ENCODE measurements at regions of chr13 and their contacts with region 1.

Region 1: DNA sequence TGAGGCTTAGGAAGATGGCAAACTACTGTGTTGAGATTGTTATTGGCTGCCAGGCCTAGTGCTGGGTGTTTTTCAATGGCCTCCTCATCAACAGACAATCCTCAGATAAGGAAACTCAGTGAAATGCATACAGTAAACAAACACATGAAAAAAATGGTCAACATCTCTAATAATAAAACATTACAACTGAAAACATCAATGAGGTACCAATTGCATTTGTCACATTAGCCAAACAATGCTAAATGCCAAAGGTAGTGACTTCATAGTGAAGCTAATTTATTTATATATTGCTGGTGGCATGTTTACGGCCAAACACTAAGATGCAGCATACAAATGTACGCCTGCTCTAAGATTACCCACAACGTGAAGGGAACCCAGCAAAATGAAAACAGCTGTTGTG is 224.0 kb upstream of the UBL3 start:
- DNase-seq: no peak
- H3K4me3 ChIP-seq: no peak overlapping the region
- H3K27ac ChIP-seq: no peak overlapping the region
- H3K4me1 ChIP-seq: no peaks in the 10 kb centered on the region
- H3K27me3 ChIP-seq: no peaks in the 10 kb centered on the region
- CTCF ChIP-seq: no peak
- POLR2A ChIP-seq: no peak

Region 2: DNA sequence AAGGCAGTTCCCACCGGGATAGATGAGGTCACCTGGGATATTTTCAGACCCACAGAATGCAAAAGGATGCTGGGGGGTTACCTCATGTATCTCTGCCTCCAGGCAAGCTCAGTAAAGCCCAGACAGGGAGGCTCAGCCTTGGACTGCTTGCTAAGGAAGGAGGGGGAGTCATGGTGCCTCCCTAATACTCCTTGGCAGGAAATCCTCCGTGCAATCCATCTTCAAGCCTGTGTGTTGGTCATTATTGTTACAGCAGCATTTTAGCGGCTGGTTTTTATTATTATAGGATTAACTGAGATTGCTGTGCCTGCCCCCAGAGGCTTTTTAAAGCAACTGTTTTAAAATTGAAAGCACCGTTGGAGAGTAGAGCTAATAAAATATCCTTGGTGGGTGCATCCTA is 35.5 kb before region 1 on chr13:
- CTCF ChIA-PET with region 1: no interaction called
- POLR2A ChIA-PET with region 1: no interaction called
- dilution Hi-C with region 1: no loop called
- intact Hi-C with region 1: no loop called
- DNase-seq: no peak
- H3K4me3 ChIP-seq: no peak overlapping the region
- H3K27ac ChIP-seq: no peak overlapping the region
- H3K4me1 ChIP-seq: no peaks in the 10 kb centered on the region
- H3K27me3 ChIP-seq: peaks cover 0 to 14% of the 10 kb centered on the region in 2 experiments
- CTCF ChIP-seq: no peak
- POLR2A ChIP-seq: no peak

Region 3: DNA sequence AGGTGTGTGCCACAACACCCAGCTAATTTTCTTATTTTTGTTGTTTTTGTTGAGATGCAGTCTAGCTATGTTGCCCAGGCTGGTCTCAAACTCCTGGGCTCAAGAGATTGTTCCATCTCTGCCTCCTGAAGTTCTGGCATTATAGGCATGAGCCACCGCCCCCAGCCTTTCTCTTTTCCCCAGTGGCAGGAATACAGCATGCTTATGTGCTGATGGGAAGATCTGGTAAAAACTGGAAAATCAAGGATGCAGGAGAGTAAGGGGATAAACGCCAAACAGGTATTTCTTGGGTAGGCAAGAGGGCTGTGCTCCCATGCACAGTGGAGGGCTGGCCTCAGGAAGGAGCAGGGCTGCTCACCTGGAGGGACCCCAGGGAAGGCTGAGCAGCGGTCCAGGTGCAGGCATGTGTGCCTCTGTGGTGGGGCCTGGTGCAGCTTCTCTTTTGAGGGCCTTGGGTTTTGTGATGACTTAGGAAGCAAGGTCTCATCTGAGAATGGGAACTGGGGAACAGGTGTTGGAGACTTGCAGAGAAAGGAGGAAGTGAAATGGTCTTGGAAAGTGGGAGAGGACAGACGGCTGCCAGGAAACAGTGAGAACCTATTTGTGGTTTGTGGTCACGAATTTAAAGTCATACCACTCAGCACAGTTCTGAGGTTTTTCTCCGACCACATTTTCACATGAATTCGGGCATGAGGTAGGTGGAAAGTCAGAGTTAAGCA is 964.6 kb after region 1 on chr13:
- CTCF ChIA-PET with region 1: no interaction called
- POLR2A ChIA-PET with region 1: interaction called, 12 read pairs
- dilution Hi-C with region 1: no loop called
- intact Hi-C with region 1: no loop called
- DNase-seq: no peak
- H3K4me3 ChIP-seq: no peak overlapping the region
- H3K27ac ChIP-seq: no peak overlapping the region
- H3K4me1 ChIP-seq: no peaks in the 10 kb centered on the region
- H3K27me3 ChIP-seq: peaks cover 0 to 5% of the 10 kb centered on the region in 2 experiments
- CTCF ChIP-seq: no peak
- POLR2A ChIP-seq: no peak